ENCODE measurements at regions of chr20 and their contacts with region 1.

Region 1: GRCh38 chr20:2451939-2452732 is 18.5 kb downstream of the SNRPB start:
- DNase-seq: peak in 1 of 2 experiments; percentile 94
- H3K4me3 ChIP-seq: no peak overlapping the region
- H3K27ac ChIP-seq: no peak overlapping the region
- H3K4me1 ChIP-seq: peaks cover 0 to under 1% (median 0%) of the 10 kb centered on the region in 4 experiments; a peak in 1 of 7 replicates
- H3K27me3 ChIP-seq: no peaks in the 10 kb centered on the region
- CTCF ChIP-seq: peak; percentile 73 to 94 (median 93)
- EP300 ChIP-seq: no peak
- POLR2A ChIP-seq: no peak
- RAD21 ChIP-seq: peak; percentile 89 to 90

Region 2: GRCh38 chr20:2206957-2207769 is 245.0 kb before region 1 on chr20:
- CTCF ChIA-PET with region 1: interaction called, 26 read pairs
- POLR2A ChIA-PET with region 1: no interaction called
- DNase-seq: peak; percentile 39 to 91
- H3K4me3 ChIP-seq: peak overlapping the region; percentile 35 to 71 (median 68)
- H3K27ac ChIP-seq: no peak overlapping the region
- H3K4me1 ChIP-seq: no peaks in the 10 kb centered on the region; a peak in 2 of 7 replicates
- H3K27me3 ChIP-seq: peaks cover 0 to 5% (median 3%) of the 10 kb centered on the region in 4 experiments; a peak in 4 of 7 replicates
- CTCF ChIP-seq: peak; percentile 71 to 90 (median 82)
- EP300 ChIP-seq: no peak
- POLR2A ChIP-seq: no peak
- RAD21 ChIP-seq: peak; percentile 90 to 93

Region 3: DNA sequence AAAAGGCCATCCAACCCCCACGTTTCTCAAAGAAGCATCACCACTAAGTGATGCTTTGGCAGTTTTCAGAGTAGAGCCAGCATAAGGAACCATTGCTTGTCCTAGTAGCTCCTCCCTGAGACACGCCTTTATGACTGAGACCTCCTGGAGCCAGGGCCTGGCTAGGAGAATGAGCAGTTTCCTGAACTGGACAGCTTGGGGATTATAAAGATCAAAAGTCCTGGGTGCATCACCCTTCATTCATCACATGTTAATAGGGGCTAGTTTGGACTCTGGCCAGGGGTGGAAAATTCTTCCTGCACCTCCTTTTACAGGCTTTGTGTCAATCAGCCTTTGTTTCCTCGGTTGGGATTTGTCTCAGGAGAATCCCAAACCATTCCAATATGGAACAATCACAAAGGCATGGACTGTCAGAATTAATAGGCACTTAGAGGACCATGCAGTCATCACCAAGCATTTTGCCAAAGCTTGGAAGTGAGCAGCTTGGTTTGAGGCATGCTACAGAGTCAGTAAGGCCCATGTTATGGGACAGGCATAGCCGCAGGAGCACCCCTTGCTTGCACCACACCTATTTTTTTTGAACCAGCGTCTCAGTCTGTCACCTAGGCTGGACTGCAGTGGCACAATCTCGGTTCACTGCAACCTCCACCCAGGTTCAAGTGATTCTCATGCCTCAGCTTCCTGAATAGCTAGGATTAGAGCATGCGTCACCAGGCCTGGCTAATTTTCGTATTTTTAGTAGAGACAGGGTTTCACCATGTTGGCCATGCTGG is 221.2 kb before region 1 on chr20:
- CTCF ChIA-PET with region 1: no interaction called
- POLR2A ChIA-PET with region 1: no interaction called
- DNase-seq: no peak
- H3K4me3 ChIP-seq: no peak overlapping the region
- H3K27ac ChIP-seq: no peak overlapping the region
- H3K4me1 ChIP-seq: peaks cover 2 to 13% (median 6%) of the 10 kb centered on the region in 4 experiments; a peak in 6 of 7 replicates
- H3K27me3 ChIP-seq: no peaks in the 10 kb centered on the region
- CTCF ChIP-seq: no peak
- EP300 ChIP-seq: no peak
- POLR2A ChIP-seq: no peak
- RAD21 ChIP-seq: no peak

Region 4: DNA sequence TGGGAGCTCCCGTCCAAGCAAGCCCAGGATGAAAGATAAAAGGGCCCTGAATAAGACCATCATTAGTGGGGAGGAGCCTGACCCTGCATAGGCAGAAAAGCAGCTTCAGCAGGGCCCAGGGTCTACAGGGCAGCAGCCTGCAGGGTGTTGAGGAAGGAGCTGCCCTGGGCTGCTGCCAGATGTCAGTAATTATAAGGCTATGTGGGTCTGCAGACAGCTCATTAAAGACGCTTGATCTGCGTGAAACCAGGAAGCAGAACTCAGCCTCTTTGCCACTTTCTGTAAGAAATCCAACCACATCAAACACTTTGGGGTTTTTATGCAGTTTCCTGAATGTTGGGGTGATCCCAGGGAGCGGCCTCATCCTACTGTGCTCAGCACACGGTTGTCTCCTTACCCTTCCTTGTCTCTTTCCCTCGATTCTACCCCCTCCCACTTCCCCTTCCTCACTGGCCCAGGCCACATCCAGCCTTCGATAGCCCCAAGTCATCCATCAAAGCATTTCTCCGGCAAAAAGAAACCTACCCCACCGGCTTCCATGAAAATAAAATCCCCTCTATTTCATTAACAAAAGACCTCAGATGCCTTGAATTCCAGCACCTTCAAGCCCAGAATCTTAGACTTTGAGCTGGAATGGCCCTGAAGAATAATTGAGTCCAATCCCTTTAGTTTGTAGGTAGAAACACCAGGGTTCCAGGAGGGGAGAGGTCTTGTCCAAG is 72.5 kb before region 1 on chr20:
- CTCF ChIA-PET with region 1: interaction called, 17 read pairs
- POLR2A ChIA-PET with region 1: no interaction called
- DNase-seq: no peak
- H3K4me3 ChIP-seq: no peak overlapping the region
- H3K27ac ChIP-seq: peak overlapping the region; percentile 64; the same call in 1 of the 2 replicates
- H3K4me1 ChIP-seq: peaks cover 0 to 12% (median 9%) of the 10 kb centered on the region in 4 experiments; a peak in 6 of 7 replicates
- H3K27me3 ChIP-seq: no peaks in the 10 kb centered on the region
- CTCF ChIP-seq: no peak
- EP300 ChIP-seq: no peak
- POLR2A ChIP-seq: no peak
- RAD21 ChIP-seq: no peak

Region 5: DNA sequence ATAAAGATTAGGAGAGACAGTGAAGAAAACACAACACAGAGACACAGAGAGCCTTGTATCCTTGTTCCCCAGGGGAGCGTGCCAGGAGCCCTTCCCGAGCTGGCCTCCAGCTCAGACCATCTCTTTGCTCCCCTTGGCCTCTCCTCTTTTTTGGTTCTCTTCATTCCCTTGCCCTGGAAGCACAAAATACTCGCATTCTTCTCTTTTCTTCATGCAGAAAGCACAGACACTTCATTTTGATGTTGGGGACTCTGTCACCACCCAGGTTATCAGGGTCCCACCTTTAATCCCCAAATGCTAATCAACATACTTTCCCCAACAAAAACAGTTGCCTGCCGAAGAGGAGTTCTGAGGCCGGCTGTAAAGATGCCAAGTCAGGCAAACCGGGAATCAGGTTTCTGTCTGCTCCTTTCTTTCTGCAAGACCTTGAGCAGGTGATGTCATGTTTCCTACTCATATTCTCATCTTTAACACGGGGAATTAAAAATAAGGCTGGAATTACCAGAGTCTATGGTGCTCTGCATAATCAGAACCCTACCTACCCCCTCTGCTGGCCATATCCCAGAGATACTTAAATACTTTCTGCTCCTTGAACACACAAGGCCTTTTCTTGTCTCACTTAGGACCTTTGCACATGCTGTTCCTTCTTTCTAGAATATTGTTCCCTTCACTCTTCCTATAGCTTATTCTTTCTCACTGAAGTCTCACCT is 49.7 kb before region 1 on chr20:
- CTCF ChIA-PET with region 1: interaction called, 12 read pairs
- POLR2A ChIA-PET with region 1: no interaction called
- DNase-seq: no peak
- H3K4me3 ChIP-seq: no peak overlapping the region
- H3K27ac ChIP-seq: no peak overlapping the region
- H3K4me1 ChIP-seq: 0 out of 7 replicates have a peak, but pooled peaks cover 0 to 2% (median 0%) of the 10 kb centered on the region in 4 experiments
- H3K27me3 ChIP-seq: no peaks in the 10 kb centered on the region
- CTCF ChIP-seq: peak in 2 of 3 experiments; percentile 18 to 39; a peak in 2 of 4 replicates
- EP300 ChIP-seq: no peak
- POLR2A ChIP-seq: no peak
- RAD21 ChIP-seq: peak; percentile 15 to 24; a peak in 2 of 4 replicates

Region 6: DNA sequence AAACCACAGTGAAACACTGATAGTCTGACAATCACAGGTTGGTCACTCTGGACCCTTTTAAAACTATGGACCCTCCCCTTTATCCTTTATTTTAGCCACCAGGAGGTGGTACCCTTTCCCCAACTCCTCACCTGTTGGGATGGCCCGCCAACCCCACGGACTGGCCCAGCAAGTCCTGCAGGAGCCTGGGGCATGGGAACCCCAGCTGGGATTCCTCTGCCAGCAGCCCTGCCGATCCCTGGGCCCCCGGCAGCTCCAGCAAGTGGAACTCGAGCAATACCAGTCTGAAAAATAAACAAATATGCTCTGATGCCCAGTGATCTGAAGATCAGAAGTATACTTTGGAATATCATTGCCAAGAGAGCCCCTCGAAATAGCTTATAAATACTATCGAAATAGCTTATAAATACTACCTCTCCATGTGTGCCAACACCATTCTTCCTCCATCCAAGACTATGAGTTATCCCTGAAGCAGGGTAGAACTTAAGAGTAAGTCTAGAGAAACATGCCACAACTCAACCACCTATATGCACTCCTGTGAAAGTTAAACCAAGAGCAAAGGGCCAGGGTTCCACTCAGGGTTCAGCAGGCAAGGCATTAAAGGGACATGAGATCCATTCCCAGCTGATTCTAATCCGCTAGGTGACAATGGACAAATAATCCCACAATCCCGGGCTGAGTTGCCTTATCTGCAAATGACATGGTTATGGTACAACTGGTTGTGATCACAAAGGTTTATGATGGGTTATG is 11.7 kb after region 1 on chr20:
- CTCF ChIA-PET with region 1: interaction called, 10 read pairs
- POLR2A ChIA-PET with region 1: interaction called, 119 read pairs
- DNase-seq: no peak
- H3K4me3 ChIP-seq: no peak overlapping the region
- H3K27ac ChIP-seq: no peak overlapping the region
- H3K4me1 ChIP-seq: peaks cover 0 to 2% (median under 1%) of the 10 kb centered on the region in 4 experiments; a peak in 3 of 7 replicates
- H3K27me3 ChIP-seq: no peaks in the 10 kb centered on the region
- CTCF ChIP-seq: no peak
- EP300 ChIP-seq: no peak
- POLR2A ChIP-seq: peak; percentile 10 to 54
- RAD21 ChIP-seq: no peak

Region 7: DNA sequence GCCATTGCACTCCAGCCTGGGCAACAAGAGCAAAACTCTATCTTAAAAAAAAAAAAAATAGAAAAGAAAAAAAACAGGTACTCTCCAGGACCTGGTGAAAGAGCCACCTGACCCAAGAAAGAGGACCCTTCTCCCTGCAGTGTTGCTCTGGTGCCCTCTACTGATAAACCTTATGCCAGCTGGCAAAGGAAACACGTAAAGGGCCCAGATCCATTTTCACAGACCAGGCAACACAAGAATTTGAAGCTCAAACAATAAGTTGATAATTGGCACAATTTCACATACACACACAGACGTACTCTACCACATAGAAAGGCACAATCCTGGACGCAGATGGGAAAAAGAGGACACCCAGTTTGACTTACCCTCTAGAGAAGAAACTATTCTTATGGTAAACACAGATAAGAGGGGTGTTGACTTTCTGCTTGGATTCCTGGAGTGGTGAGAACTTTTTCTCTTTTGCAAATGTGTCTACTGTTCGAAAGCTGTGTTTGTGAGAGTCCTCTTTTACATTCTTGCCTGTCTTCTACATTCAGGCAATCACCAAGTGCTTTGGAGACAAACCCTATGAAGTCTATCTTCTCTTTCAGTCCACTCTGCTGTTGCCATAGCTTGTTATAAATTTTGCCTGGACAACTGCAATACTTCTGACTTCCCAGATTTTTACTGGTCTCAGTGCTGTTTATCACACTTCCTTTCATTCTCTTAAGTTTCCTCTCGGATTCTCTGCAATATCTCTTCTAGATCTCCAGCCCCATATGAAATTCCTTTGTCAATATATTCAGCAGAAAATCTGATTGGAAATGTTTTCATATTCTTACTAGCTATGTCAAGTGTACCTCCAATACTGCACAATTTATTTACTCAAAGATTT is 24.8 kb after region 1 on chr20:
- CTCF ChIA-PET with region 1: interaction called, 11 read pairs
- POLR2A ChIA-PET with region 1: interaction called, 119 read pairs
- DNase-seq: no peak
- H3K4me3 ChIP-seq: no peak overlapping the region
- H3K27ac ChIP-seq: no peak overlapping the region
- H3K4me1 ChIP-seq: no peaks in the 10 kb centered on the region
- H3K27me3 ChIP-seq: no peaks in the 10 kb centered on the region; a peak in 1 of 7 replicates
- CTCF ChIP-seq: peak; percentile 8 to 55 (median 48)
- EP300 ChIP-seq: no peak
- POLR2A ChIP-seq: no peak
- RAD21 ChIP-seq: peak; percentile 54 to 60

Region 8: DNA sequence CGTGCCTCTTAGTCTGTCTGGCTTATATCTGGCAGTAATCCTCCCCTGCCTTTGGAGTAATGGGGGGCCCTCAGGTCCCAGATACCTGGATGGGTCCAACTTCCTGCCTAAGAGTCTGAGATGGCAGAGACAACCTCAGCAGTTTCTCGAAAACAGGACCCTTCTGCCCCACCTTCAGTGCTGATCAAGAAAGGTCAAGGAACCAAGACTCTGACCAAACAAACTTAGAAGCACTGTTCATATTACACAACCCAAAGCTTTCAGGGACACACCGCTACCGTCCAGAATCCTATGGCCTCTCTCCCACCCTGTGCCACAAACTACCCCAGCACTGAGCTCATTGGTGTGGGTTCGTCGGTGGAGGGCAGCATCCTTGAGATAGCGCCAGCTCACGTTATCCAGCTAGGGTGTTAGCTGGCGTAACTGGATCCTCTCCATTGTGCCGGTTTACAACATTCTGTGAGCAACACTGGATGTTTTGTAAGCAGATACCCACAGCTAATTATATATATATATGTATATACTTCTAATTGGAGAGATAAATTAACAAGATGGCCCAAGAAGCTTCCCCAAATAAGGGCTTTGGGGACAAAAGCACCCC is 76.6 kb after region 1 on chr20:
- CTCF ChIA-PET with region 1: no interaction called
- POLR2A ChIA-PET with region 1: no interaction called
- DNase-seq: no peak
- H3K4me3 ChIP-seq: no peak overlapping the region
- H3K27ac ChIP-seq: no peak overlapping the region
- H3K4me1 ChIP-seq: no peaks in the 10 kb centered on the region
- H3K27me3 ChIP-seq: peaks cover 2 to 23% (median 18%) of the 10 kb centered on the region in 4 experiments; a peak in 6 of 7 replicates
- CTCF ChIP-seq: no peak
- EP300 ChIP-seq: no peak
- POLR2A ChIP-seq: no peak
- RAD21 ChIP-seq: no peak

Measured in H1 (cell line).